Activated T-helper 2 cell treated with anti-CD3 and anti-CD28 coated beads, Interferon-gamma antibody, Interleukin-2, Interleukin-4, amounts not matched to agents 10 μg/mL and 5 μg/mL and 100 μg/mL, durations not matched to agents 14 hours and 24 hours and 36 hours (primary cell): ENCODE measurements at regions of chr1 and their contacts with region 1.

Region 1: GRCh38 chr1:181077576-181078242 is 10.8 kb upstream of the IER5 start:
- DNase-seq: no peak
- H3K4me3 Mint-ChIP-seq: no peak overlapping the region
- H3K27ac Mint-ChIP-seq: no peak overlapping the region
- H3K4me1 Mint-ChIP-seq: peaks cover 28% of the 10 kb centered on the region
- H3K27me3 Mint-ChIP-seq: peaks cover 15% of the 10 kb centered on the region

Region 2: DNA sequence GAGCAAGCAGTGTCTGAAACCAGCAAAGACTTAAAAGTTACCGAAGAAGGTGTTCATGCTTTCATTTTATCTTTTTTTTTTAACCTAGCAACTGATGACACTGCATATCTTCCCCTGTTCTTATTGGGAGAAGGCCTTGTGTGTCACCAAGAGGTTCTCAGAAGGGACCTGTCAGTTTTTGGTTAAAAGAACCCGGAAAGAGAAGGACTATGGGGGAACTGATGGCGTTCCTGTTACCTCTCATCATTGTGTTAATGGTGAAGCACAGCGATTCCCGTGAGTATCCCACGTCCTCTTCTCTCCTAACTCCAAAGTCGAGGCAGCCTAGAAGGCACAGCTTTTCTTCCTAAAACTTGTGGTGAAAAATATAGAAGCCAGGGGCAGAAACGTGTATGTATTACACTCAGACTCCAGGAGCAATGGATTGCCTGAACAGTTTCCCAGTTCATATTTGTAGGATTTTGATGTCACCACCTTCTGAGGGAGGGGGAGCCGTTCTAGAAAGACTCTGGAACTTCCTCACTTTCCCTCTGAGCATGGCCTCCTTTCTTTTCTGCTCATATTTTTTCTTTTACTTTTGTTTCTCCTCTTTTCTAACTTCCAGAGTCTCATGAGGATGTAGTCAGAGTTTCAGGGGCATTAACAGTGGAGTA is 43.8 kb before region 1 on chr1 and contains the start of gene MR1:
- intact Hi-C with region 1: no loop called
- DNase-seq: peak; percentile 42
- H3K4me3 Mint-ChIP-seq: peak within 1 kb of the TSS; percentile 93
- H3K27ac Mint-ChIP-seq: peak within 1 kb of the TSS; percentile 98
- H3K4me1 Mint-ChIP-seq: peaks cover 50% of the 10 kb centered on the region
- H3K27me3 Mint-ChIP-seq: peaks cover 2% of the 10 kb centered on the region
- total RNA-seq, gene MR1: 13.8 and 18.2 TPM in 2 replicates

Region 3: DNA sequence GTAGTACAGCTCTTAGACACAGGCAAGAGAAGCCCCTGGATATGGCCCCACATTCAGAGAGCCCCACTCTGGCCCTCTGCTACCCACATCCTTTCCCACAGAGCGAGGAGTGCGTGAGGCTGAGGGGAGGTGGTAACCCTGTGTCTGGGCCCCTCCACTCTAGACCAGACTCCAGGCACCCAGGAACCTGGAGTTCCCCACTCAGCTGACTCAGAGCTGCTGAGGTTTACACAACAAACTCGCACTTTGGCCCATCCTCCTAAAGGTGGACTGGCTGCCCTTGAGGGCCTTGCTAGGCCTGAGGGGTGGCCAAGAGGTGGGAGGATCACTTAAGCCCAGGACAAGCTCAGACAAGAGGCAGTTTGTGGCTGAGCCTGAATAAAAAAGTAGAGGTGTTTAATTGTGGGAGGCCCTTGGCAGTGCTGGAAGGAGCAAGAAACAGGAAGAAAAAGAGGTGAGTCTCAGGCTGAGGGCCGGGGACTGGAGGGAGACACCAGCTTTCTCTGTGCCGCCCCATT is 33.2 kb before region 1 on chr1:
- intact Hi-C with region 1: loop called (anchors 2 kb)
- DNase-seq: peak; percentile 37
- H3K4me3 Mint-ChIP-seq: peak overlapping the region; percentile 51
- H3K27ac Mint-ChIP-seq: peak overlapping the region; percentile 93
- H3K4me1 Mint-ChIP-seq: peaks cover 36% of the 10 kb centered on the region
- H3K27me3 Mint-ChIP-seq: no peaks in the 10 kb centered on the region

Region 4: DNA sequence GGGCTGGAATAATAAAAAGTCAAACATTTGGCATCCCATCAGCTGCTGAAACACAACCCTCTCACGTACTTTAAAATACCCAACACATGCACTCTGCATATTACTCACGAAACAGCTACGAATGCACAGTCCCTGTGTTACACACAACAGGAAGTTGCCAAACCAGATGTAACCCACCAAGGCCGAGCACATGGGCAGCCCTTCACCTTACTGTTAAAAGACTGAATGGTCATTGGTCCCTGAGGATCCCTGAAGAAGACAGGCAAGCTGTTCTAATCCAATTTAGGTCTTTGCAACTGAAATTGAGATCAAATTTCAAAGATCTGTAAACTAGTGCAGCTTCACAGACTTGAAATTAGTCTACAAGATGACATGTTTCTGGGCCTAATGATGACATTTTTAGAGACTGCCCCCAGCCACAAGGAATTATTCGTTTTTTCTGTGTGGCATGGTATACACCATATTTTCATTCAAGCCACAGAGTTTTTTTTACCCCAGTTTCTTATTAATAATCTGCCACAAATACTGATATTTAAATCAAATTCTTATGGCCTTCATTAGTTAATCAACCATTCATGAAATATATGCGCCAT is 14.8 kb before region 1 on chr1:
- intact Hi-C with region 1: loop called (anchors 2 kb)
- DNase-seq: no peak
- H3K4me3 Mint-ChIP-seq: peak overlapping the region; percentile 55
- H3K27ac Mint-ChIP-seq: peak overlapping the region; percentile 73
- H3K4me1 Mint-ChIP-seq: peaks cover 22% of the 10 kb centered on the region
- H3K27me3 Mint-ChIP-seq: no peaks in the 10 kb centered on the region

Region 5: DNA sequence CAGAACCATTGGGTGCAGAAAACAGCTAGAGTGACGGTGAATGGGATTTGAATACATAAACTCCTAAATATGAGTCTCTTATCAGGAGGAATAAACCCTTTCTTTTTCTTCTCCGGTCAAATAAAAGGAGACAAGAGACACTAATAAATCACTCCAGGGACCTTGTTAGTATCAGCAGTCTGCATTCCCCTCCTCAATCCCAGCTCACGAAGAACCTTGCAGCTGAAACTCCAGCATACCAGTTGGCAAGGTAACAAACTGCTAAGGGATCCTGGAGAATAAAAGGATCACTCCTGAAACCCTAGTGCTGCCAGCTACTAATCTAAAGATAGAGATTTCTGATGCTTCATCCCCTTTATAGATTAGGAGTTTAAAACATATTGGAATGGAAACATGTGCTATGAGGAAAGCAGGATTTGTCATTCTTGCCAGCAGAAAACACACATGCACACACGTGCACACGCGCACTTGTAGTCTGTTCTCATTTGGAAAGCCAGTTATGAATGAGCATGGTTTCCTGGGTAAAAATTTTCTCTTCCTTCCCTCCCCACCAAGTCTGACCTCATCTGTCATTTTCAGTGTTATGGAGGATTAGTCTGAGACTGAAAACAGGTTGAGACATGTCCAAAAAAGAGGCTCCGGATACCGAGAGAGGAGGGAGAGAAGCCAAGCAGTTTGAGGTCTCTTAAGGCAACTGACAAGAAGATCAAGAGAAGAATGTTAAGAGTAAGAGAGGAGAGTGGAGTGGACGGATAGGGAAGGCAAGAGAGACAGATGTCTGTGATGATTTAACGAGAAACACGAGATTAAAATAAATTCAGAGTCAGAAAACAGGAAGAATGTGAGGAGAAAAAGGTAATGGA is 21.7 kb after region 1 on chr1:
- intact Hi-C with region 1: no loop called
- DNase-seq: peak; percentile 45
- H3K4me3 Mint-ChIP-seq: peak overlapping the region; percentile 74
- H3K27ac Mint-ChIP-seq: peak overlapping the region; percentile 98
- H3K4me1 Mint-ChIP-seq: peaks cover 85% of the 10 kb centered on the region
- H3K27me3 Mint-ChIP-seq: no peaks in the 10 kb centered on the region

Region 6: GRCh38 chr1:181152892-181153633 is 75.4 kb after region 1 on chr1:
- intact Hi-C with region 1: no loop called
- DNase-seq: no peak
- H3K4me3 Mint-ChIP-seq: no peak overlapping the region
- H3K27ac Mint-ChIP-seq: no peak overlapping the region
- H3K4me1 Mint-ChIP-seq: peaks cover 47% of the 10 kb centered on the region
- H3K27me3 Mint-ChIP-seq: peaks cover 12% of the 10 kb centered on the region